Transverse colon (tissue), 4 donors: ENCODE measurements at regions of chr17 and their contacts with region 1.

Region 1: DNA sequence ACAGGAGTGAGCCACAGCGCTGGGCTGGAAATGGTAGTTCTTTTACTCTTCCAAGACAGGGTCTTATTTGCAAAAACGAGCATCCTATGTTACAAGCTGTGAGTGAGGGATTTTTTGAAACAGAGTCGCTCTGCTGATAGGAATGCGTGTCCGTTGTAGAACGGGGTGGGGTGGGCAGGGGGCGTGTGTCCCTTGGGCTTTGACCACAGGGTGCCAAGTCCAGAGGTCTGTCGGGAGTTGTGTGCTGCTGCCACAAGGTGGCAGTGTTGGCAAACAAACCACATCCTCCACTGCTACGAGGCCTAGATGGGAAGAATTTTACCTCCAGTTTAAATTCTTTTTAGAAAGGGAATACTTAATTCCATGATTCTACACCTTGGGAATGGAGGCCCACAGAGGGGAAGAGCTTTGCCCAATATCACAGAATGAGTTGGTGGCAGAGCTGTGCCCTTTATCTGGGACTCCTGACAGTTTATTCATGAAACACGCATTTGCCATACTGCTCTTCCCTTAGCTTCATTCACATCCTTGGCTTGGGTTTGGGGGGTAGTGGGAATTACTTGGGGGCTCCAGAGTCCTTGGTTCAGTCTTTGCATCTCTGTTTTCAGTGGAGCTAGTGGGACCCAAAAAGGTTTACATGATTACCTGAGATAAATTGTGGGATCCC is 30.6 kb upstream of the ETV4 start:
- DNase-seq: peak; percentile 75
- H3K4me3 ChIP-seq: no peak overlapping the region
- H3K27ac ChIP-seq: no peak overlapping the region
- H3K4me1 ChIP-seq: peaks cover 4 to 36% (median 21%) of the 10 kb centered on the region in 4 donors
- H3K27me3 ChIP-seq: no peaks in the 10 kb centered on the region
- CTCF ChIP-seq: peak; percentile 90 to 93 (median 92)
- EP300 ChIP-seq: no peak
- POLR2A ChIP-seq: no peak

Region 2: GRCh38 chr17:43673516-43674323 is 97.0 kb after region 1 on chr17:
- in situ Hi-C with region 1: loop called in 3 of 4 experiments (anchors 5 kb)
- intact Hi-C with region 1: no loop called
- DNase-seq: peak; percentile 80
- H3K4me3 ChIP-seq: no peak overlapping the region
- H3K27ac ChIP-seq: no peak overlapping the region
- H3K4me1 ChIP-seq: peaks cover 10 to 19% (median 16%) of the 10 kb centered on the region in 4 donors
- H3K27me3 ChIP-seq: no peaks in the 10 kb centered on the region
- CTCF ChIP-seq: peak; percentile 91 to 95 (median 93)
- EP300 ChIP-seq: no peak
- POLR2A ChIP-seq: no peak